Naive thymus-derived CD4-positive, alpha-beta T cell (primary cell): ENCODE measurements at regions of chr13 and their contacts with region 1.

Region 1: DNA sequence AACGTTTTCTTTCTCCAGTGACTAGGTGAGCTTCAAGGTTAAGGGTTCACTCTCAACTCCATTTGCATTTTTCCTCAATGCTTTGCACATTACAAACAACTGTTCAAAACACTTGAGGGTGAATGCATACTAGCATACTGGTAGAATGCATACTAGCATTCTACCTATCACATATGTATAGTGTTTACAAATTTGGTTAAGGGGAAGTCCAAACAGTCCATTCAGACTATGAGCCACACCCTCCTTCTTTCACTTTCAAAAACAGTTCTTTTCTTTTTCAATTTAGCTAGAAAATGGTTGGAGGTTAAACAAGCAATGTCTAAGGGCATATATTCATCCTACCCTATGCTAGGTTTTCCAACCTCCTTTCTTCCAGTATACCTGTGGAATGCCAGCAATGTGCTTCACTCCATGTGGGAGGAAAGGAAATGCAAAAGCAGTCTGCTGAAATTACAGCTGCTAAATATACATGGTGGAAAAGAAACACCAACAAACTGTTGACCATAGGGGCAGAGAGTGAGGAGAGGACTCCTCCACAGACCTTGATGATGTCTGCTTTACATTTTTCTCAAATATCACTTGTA is 102.6 kb downstream of the DOCK9 start:
- DNase-seq: no peak
- ATAC-seq: peak; percentile 56
- H3K4me3 ChIP-seq: no peak overlapping the region
- H3K4me3 Mint-ChIP-seq: peak overlapping the region in 1 of 10 donors; percentile 82
- H3K27ac ChIP-seq: no peak overlapping the region
- H3K27ac Mint-ChIP-seq: peak overlapping the region in 4 of 9 donors; percentile 22 to 95 (median 36)
- H3K4me1 ChIP-seq: no peaks in the 10 kb centered on the region
- H3K4me1 Mint-ChIP-seq: peaks cover 5 to 54% (median 23%) of the 10 kb centered on the region in 7 donors
- H3K27me3 ChIP-seq: no peaks in the 10 kb centered on the region
- H3K27me3 Mint-ChIP-seq: no peaks in the 10 kb centered on the region

Region 2: GRCh38 chr13:98853771-98854221 is 21.4 kb before region 1 on chr13:
- CTCF ChIA-PET with region 1: no interaction called
- POLR2A ChIA-PET with region 1: no interaction called
- intact Hi-C with region 1: loop called in 1 of 2 experiments (anchors 2 kb)
- DNase-seq: peak in 1 of 9 donors; percentile 74
- ATAC-seq: peak; percentile 78
- H3K4me3 ChIP-seq: no peak overlapping the region
- H3K4me3 Mint-ChIP-seq: peak overlapping the region in 1 of 10 donors; percentile 73
- H3K27ac ChIP-seq: no peak overlapping the region
- H3K27ac Mint-ChIP-seq: peak overlapping the region in 3 of 9 donors; percentile 32 to 74 (median 52)
- H3K4me1 ChIP-seq: no peaks in the 10 kb centered on the region
- H3K4me1 Mint-ChIP-seq: peaks cover 0 to 17% (median 0%) of the 10 kb centered on the region in 7 donors
- H3K27me3 ChIP-seq: no peaks in the 10 kb centered on the region
- H3K27me3 Mint-ChIP-seq: no peaks in the 10 kb centered on the region

Region 3: DNA sequence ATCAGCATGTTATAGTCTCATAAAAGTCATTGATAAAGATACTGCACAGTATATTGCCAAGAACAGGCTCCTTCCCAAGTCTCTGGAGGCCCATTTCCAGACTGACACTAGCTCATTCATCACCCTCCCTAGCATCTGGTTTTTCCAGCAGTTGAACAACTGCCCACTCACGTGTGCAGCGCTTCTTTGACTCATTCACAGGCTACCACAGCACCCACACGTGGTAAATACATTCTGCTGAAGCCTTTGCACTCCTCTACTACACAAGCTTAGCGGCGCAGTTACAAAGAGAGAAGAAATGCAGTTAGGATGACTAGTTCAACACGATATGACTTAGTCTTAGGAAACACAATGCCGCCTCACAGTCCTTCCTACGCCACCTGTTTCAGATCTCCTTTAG is 14.9 kb after region 1 on chr13:
- CTCF ChIA-PET with region 1: no interaction called
- POLR2A ChIA-PET with region 1: no interaction called
- intact Hi-C with region 1: no loop called
- DNase-seq: peak in 1 of 9 donors; percentile 56
- ATAC-seq: no peak
- H3K4me3 ChIP-seq: no peak overlapping the region
- H3K4me3 Mint-ChIP-seq: no peak overlapping the region
- H3K27ac ChIP-seq: no peak overlapping the region
- H3K27ac Mint-ChIP-seq: peak overlapping the region in 6 of 9 donors; percentile 9 to 60 (median 42)
- H3K4me1 ChIP-seq: no peaks in the 10 kb centered on the region
- H3K4me1 Mint-ChIP-seq: peaks cover 0 to 17% (median 3%) of the 10 kb centered on the region in 7 donors
- H3K27me3 ChIP-seq: no peaks in the 10 kb centered on the region
- H3K27me3 Mint-ChIP-seq: no peaks in the 10 kb centered on the region

Region 4: DNA sequence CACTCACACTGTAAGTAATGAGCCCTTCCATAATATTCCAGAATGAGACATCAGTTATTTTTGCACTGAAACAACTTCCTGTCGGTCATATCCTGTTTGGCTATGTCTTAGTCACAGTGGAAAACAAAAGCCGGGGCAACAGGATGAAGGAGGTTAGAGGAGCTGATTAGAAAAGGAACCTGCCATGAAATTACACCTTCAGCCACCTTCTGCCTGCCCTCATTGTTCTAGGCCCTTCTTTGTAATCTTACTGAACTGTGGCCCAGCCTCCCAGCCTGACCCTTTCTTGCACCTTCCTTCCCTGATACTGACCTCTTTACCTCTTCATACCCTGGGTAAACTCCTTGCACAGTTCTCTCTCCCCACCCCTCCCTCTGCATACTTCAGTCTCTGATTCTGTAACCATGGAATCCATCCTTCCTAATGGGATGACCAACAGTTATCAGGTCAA is 35.3 kb after region 1 on chr13:
- CTCF ChIA-PET with region 1: interaction called, 3 read pairs
- POLR2A ChIA-PET with region 1: no interaction called
- intact Hi-C with region 1: loop called in 1 of 2 experiments (anchors 1 kb)
- DNase-seq: peak in 8 of 9 donors; percentile 13 to 59 (median 50)
- ATAC-seq: peak; percentile 71
- H3K4me3 ChIP-seq: no peak overlapping the region
- H3K4me3 Mint-ChIP-seq: peak overlapping the region in 9 of 10 donors; percentile 5 to 82 (median 69)
- H3K27ac ChIP-seq: no peak overlapping the region
- H3K27ac Mint-ChIP-seq: peak overlapping the region; percentile 75 to 96 (median 90)
- H3K4me1 ChIP-seq: peaks cover 9 to 10% of the 10 kb centered on the region in 2 donors
- H3K4me1 Mint-ChIP-seq: peaks cover 12 to 53% (median 47%) of the 10 kb centered on the region in 7 donors
- H3K27me3 ChIP-seq: no peaks in the 10 kb centered on the region
- H3K27me3 Mint-ChIP-seq: no peaks in the 10 kb centered on the region

Region 5: DNA sequence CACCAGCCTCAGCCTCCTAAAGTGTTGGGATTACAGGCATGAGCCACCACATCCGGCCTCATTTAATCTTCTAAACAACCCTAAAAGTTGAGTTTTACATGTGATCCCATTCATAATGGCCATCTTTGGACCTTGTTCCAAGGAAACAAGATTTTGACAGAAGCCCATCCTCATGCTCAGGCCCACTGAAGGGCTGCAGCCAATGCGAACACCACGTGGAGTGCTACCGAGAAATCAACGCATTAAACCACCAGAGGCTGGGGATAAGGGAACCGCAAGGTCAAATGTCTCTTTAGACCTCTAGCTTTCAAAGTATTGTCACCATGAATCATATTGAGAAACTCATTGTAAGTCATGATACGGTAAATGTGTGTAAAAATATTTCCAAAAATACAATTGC is 152.0 kb after region 1 on chr13:
- CTCF ChIA-PET with region 1: interaction called, 3 read pairs
- POLR2A ChIA-PET with region 1: no interaction called
- intact Hi-C with region 1: loop called (anchors 2 to 5 kb)
- DNase-seq: no peak
- ATAC-seq: no peak
- H3K4me3 ChIP-seq: no peak overlapping the region
- H3K4me3 Mint-ChIP-seq: peak overlapping the region in 1 of 10 donors; percentile 53
- H3K27ac ChIP-seq: no peak overlapping the region
- H3K27ac Mint-ChIP-seq: peak overlapping the region in 4 of 9 donors; percentile 35 to 86 (median 72)
- H3K4me1 ChIP-seq: peaks cover 0 to 27% of the 10 kb centered on the region in 2 donors
- H3K4me1 Mint-ChIP-seq: peaks cover 24 to 93% (median 88%) of the 10 kb centered on the region in 7 donors
- H3K27me3 ChIP-seq: no peaks in the 10 kb centered on the region
- H3K27me3 Mint-ChIP-seq: no peaks in the 10 kb centered on the region